Left ventricle myocardium inferior (tissue), 1 donor: ENCODE measurements at regions of chr7 and their contacts with region 1.

Region 1: DNA sequence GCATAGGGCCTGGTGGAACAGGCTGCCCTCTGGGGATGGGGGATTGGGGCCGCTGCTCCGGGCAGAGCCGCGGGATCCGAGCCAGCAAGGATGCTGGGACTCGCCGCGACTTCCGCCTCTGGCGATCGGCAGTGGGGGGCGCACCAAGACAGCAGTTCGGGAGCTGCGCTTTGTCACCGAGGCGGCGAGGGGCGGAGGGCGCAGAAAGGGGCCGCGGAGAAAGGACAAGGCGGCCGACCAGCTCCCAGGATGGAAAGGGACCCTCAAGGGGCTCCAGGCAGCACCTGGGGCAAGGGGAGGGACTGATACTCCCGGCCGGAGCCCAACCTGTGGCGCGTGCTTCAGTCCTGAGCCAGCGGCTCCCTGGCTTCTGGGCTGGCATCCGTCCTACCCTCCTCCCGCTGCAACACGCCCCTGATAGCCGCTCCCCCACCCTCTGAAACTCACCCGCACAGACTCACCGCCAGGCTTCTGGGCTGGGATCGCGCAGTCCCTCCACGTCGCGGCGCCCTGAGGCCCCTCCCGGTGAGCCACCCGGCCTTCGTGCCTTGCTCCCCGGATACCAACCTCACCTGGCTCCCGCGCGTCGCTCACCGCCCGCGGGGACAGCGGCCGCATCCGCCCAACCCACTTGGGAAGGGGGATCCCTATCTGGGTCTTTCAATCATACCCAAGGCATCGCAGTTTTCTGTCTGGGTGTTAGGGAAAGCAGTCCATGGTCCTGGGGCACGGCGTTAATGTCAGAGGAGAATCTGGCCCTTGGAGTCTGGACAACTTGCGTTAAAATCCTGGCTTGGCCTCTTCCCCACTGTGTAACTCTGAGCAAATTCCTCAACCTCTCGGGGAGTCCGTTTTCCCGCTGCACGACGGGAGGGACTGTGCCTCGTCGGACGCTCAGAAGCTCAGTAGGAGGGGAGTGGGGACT is 7.0 kb upstream of the EVX1 start:
- DNase-seq: peak; percentile 43
- H3K4me3 ChIP-seq: peak overlapping the region; percentile 61
- H3K27ac ChIP-seq: no peak overlapping the region
- H3K4me1 ChIP-seq: peaks cover 25% of the 10 kb centered on the region
- H3K27me3 ChIP-seq: peaks cover 100% of the 10 kb centered on the region
- CTCF ChIP-seq: peak; percentile 47

Region 2: DNA sequence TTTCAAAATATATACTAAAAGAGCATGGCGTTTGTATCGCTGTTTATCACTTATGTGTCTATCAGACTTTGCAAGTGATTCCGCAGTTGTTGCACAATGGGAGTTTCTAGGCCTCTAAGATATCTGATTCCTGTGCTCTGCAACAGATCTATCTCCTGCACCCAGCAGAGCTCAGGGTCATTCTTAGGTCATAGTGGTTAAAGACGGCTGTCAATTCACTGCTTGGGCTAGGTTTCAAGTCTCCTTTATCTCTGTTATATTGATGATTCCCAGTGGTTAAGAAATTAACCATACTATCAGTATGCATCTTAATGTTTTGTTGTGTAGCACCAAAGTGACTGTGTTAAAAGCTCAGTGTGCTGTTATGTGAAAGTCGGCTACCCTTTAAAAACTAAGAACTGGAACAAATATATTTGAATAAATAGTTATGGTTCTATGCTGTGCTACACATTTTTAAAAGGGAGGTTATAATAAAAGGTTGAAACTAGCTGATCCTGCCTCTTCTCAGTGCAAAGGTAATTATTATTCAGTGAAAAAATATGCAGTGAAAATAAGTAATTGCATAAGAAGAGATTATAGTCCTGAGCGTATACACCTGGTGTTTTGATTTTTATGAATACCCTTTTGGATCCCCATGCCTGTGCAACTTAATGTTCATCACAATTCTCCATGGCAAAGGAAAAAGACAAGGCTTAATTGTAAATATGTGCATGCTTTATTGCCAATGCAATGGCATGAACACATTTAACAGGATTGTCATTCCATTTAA is 163.8 kb before region 1 on chr7:
- intact Hi-C with region 1: no loop called
- DNase-seq: no peak
- H3K4me3 ChIP-seq: no peak overlapping the region
- H3K27ac ChIP-seq: no peak overlapping the region
- H3K4me1 ChIP-seq: no peaks in the 10 kb centered on the region
- H3K27me3 ChIP-seq: peaks cover 71% of the 10 kb centered on the region
- CTCF ChIP-seq: no peak

Region 3: GRCh38 chr7:27576360-27576944 is 340.8 kb after region 1 on chr7:
- intact Hi-C with region 1: loop called (anchors 10 kb)
- DNase-seq: no peak
- H3K4me3 ChIP-seq: no peak overlapping the region
- H3K27ac ChIP-seq: no peak overlapping the region
- H3K4me1 ChIP-seq: no peaks in the 10 kb centered on the region
- H3K27me3 ChIP-seq: no peaks in the 10 kb centered on the region
- CTCF ChIP-seq: peak; percentile 73

Region 4: DNA sequence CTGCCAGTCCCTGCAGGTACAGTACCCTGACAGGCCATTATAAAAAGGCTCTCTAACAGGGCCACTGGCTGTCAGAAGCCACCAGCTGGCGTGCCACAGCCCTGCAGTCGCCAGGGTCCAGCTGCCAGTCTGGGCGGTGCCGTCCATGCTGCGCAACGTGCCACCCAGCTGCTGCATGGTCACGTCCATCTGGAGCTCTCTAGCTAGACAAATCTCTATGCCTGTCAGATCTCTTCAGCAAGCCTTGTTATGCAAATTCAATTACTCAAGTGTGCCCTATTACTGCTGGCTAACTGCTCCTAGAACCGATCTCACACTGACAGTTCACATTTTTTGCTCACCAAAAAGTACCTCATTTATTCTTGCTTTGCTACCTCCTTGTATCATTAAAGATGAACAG is 351.2 kb after region 1 on chr7:
- intact Hi-C with region 1: no loop called
- DNase-seq: no peak
- H3K4me3 ChIP-seq: no peak overlapping the region
- H3K27ac ChIP-seq: no peak overlapping the region
- H3K4me1 ChIP-seq: no peaks in the 10 kb centered on the region
- H3K27me3 ChIP-seq: no peaks in the 10 kb centered on the region
- CTCF ChIP-seq: no peak